Endothelial cell of umbilical vein (primary cell): ENCODE measurements at regions of chr2 and their contacts with region 1.

Region 1: DNA sequence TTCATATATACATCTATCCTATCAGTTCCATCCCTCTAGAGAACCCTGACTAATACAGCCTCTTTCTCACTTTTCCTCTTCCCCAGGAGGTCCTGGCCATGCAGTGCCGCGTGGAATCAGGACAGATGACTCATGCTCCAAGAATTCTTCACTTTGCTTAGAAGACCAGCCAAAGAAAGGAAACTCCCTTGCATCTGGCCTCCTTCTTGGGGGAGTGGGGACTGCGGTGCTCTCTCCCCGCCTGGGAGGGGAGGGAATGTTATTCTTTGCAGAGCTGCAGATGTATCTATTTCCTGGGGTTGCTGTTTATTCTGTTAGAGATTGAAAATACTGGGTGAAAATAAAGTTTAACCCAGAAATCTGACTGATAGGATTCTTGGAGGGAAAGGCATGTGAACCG is 111.5 kb upstream of the SH3BP4 start:
- DNase-seq: peak; percentile 95
- H3K4me3 ChIP-seq: no peak overlapping the region
- H3K27ac ChIP-seq: peak overlapping the region; percentile 62
- H3K4me1 ChIP-seq: peaks cover 19% of the 10 kb centered on the region
- H3K27me3 ChIP-seq: no peaks in the 10 kb centered on the region
- CTCF ChIP-seq: no peak
- POLR2A ChIP-seq: no peak

Region 2: GRCh38 chr2:234620018-234620417 is 220.3 kb before region 1 on chr2:
- CTCF ChIA-PET with region 1: no interaction called
- POLR2A ChIA-PET with region 1: no interaction called
- dilution Hi-C with region 1: no loop called
- intact Hi-C with region 1: loop called (anchors 1 kb)
- DNase-seq: peak; percentile 84
- H3K4me3 ChIP-seq: no peak overlapping the region
- H3K27ac ChIP-seq: no peak overlapping the region
- H3K4me1 ChIP-seq: peaks cover 20% of the 10 kb centered on the region
- H3K27me3 ChIP-seq: peaks cover 34 to 41% of the 10 kb centered on the region in 2 experiments
- CTCF ChIP-seq: no peak
- POLR2A ChIP-seq: peak; percentile 73

Region 3: GRCh38 chr2:234679741-234680687 is 160.3 kb before region 1 on chr2:
- CTCF ChIA-PET with region 1: no interaction called
- POLR2A ChIA-PET with region 1: no interaction called
- dilution Hi-C with region 1: no loop called
- intact Hi-C with region 1: loop called (anchors 1 kb)
- DNase-seq: peak; percentile 93
- H3K4me3 ChIP-seq: no peak overlapping the region
- H3K27ac ChIP-seq: peak overlapping the region; percentile 69
- H3K4me1 ChIP-seq: peaks cover 20% of the 10 kb centered on the region
- H3K27me3 ChIP-seq: no peaks in the 10 kb centered on the region
- CTCF ChIP-seq: no peak
- POLR2A ChIP-seq: no peak

Region 4: GRCh38 chr2:234823877-234824376 is 16.4 kb before region 1 on chr2:
- CTCF ChIA-PET with region 1: interaction called, 7 read pairs
- POLR2A ChIA-PET with region 1: no interaction called
- dilution Hi-C with region 1: no loop called
- intact Hi-C with region 1: loop called (anchors 1 kb)
- DNase-seq: peak; percentile 98
- H3K4me3 ChIP-seq: no peak overlapping the region
- H3K27ac ChIP-seq: peak overlapping the region; percentile 90
- H3K4me1 ChIP-seq: peaks cover 24% of the 10 kb centered on the region
- H3K27me3 ChIP-seq: no peaks in the 10 kb centered on the region
- CTCF ChIP-seq: no peak
- POLR2A ChIP-seq: peak; percentile 69